CD8-positive, alpha-beta T cell (primary cell): ENCODE measurements at regions of chr22 and their contacts with region 1.

Region 1: GRCh38 chr22:49992921-49993648 is 19.5 kb downstream of the IL17REL start:
- DNase-seq: peak; percentile 39 to 85 (median 74)
- ATAC-seq: peak; percentile 95
- H3K4me3 ChIP-seq: no peak overlapping the region
- H3K4me3 Mint-ChIP-seq: no peak overlapping the region
- H3K27ac ChIP-seq: no peak overlapping the region
- H3K27ac Mint-ChIP-seq: peak overlapping the region; percentile 21
- H3K4me1 ChIP-seq: peaks cover 8% of the 10 kb centered on the region
- H3K4me1 Mint-ChIP-seq: peaks cover 5% of the 10 kb centered on the region
- H3K27me3 ChIP-seq: no peaks in the 10 kb centered on the region
- H3K27me3 Mint-ChIP-seq: peaks cover 3% of the 10 kb centered on the region
- CTCF ChIP-seq: peak; percentile 77

Region 2: GRCh38 chr22:49767355-49768062 is 225.6 kb before region 1 on chr22:
- CTCF ChIA-PET with region 1: interaction called, 4 read pairs
- POLR2A ChIA-PET with region 1: no interaction called
- intact Hi-C with region 1: loop called in 1 of 2 experiments (anchors 1 kb)
- DNase-seq: peak in 3 of 9 experiments; percentile 62 to 71 (median 64)
- ATAC-seq: peak; percentile 24
- H3K4me3 ChIP-seq: no peak overlapping the region
- H3K4me3 Mint-ChIP-seq: no peak overlapping the region
- H3K27ac ChIP-seq: no peak overlapping the region
- H3K27ac Mint-ChIP-seq: peak overlapping the region; percentile 19
- H3K4me1 ChIP-seq: peaks cover 3% of the 10 kb centered on the region
- H3K4me1 Mint-ChIP-seq: peaks cover 12% of the 10 kb centered on the region
- H3K27me3 ChIP-seq: no peaks in the 10 kb centered on the region
- H3K27me3 Mint-ChIP-seq: no peaks in the 10 kb centered on the region
- CTCF ChIP-seq: peak; percentile 71

Region 3: GRCh38 chr22:49960159-49961004 is 32.7 kb before region 1 on chr22 and contains the start of gene PIM3:
- CTCF ChIA-PET with region 1: interaction called, 4 read pairs
- POLR2A ChIA-PET with region 1: no interaction called
- intact Hi-C with region 1: loop called in 1 of 2 experiments (anchors 1 kb)
- DNase-seq: peak; percentile 80 to 96 (median 90)
- ATAC-seq: peak; percentile 61
- H3K4me3 ChIP-seq: peak within 1 kb of the TSS; percentile 67 to 86
- H3K4me3 Mint-ChIP-seq: peak within 1 kb of the TSS; percentile 93
- H3K27ac ChIP-seq: peak within 1 kb of the TSS; percentile 71 to 80
- H3K27ac Mint-ChIP-seq: peak within 1 kb of the TSS; percentile 95
- H3K4me1 ChIP-seq: peaks cover 33% of the 10 kb centered on the region
- H3K4me1 Mint-ChIP-seq: peaks cover 17% of the 10 kb centered on the region
- H3K27me3 ChIP-seq: no peaks in the 10 kb centered on the region
- H3K27me3 Mint-ChIP-seq: no peaks in the 10 kb centered on the region
- CTCF ChIP-seq: no peak
- total RNA-seq, gene PIM3: 316 to 328 TPM